ENCODE measurements at regions of chr9 and their contacts with region 1.

Region 1: GRCh38 chr9:15306757-15307534 is at the start of gene TTC39B:
- DNase-seq: peak; percentile 44 to 82 (median 64)
- ATAC-seq: peak; percentile 68 to 77
- H3K4me3 Mint-ChIP-seq: peak within 1 kb of the TSS; percentile 95 to 100 (median 97)
- H3K27ac Mint-ChIP-seq: peak within 1 kb of the TSS; percentile 90 to 97 (median 96)
- H3K4me1 Mint-ChIP-seq: peaks cover 21 to 64% (median 62%) of the 10 kb centered on the region in 4 donors
- H3K27me3 Mint-ChIP-seq: no peaks in the 10 kb centered on the region
- polyA plus RNA-seq, gene TTC39B: 4.5 to 13.0 (median 10.1) TPM

Region 2: DNA sequence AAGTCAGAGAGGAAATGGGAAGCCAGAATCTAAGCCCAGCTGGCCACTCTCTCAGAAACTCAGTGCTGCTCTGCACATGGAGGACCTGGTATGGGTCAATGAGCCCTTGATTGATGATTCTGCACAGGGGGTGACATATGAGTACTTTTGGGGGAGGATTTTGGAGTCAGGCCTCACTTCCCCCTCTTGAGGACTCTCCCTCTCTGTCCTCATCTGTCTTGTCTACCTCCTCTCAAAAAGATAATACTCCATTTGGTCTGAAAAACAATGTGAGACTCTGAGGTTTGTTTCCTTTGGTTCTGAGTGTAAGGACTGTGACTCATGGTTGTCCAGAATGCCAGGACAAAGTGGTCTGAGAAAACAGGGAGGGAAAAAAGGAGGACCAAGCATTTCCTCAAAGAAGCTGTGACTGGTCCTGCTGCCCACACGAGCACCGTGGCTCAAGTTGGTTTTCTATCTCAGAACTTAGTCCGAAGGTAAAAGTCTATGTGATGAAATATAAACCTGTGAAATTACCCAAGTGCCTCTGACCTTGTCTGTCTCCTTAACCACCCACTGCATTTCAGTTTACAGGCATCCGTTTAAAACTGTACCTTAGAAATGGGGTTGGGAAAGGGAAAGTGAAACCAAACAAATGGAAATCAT is 11.1 kb before region 1 on chr9:
- POLR2A ChIA-PET with region 1: interaction called, 129 read pairs
- DNase-seq: peak in 3 of 10 donors; percentile 44 to 66 (median 62)
- ATAC-seq: peak; percentile 14 to 43
- H3K4me3 Mint-ChIP-seq: peak overlapping the region; percentile 74 to 92 (median 84)
- H3K27ac Mint-ChIP-seq: peak overlapping the region; percentile 93 to 100 (median 97)
- H3K4me1 Mint-ChIP-seq: peaks cover 43 to 93% (median 84%) of the 10 kb centered on the region in 4 donors
- H3K27me3 Mint-ChIP-seq: no peaks in the 10 kb centered on the region

Region 3: DNA sequence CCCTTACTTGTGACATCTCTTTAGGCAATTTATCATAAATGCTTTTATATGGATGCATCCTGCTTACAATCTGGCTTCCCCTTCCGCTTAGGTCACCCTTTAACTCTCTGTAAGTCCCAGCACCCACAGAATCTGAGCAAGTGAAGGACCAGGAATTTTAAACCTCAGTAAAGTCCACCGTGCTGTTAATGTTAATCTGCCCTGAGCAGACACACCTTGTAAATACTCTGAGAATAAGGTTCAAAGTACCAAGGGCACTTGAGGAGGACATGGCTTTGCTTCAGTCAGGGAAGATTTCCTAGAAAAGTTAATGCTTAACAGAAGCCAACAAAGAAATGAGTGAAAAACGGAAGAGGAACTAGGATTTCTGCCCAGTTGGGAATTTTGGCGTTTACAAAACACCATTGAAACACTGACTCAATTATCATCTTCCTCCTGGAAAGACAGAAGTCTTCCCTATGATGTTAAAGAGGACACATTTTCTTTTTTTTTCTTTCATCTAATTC is 26.5 kb after region 1 on chr9:
- POLR2A ChIA-PET with region 1: no interaction called
- DNase-seq: no peak
- ATAC-seq: no peak
- H3K4me3 Mint-ChIP-seq: no peak overlapping the region
- H3K27ac Mint-ChIP-seq: peak overlapping the region in 2 of 10 donors; percentile 8 to 9
- H3K4me1 Mint-ChIP-seq: peaks cover 0 to 6% (median 3%) of the 10 kb centered on the region in 4 donors
- H3K27me3 Mint-ChIP-seq: peaks cover 0 to 2% (median 0%) of the 10 kb centered on the region in 5 donors

Region 4: DNA sequence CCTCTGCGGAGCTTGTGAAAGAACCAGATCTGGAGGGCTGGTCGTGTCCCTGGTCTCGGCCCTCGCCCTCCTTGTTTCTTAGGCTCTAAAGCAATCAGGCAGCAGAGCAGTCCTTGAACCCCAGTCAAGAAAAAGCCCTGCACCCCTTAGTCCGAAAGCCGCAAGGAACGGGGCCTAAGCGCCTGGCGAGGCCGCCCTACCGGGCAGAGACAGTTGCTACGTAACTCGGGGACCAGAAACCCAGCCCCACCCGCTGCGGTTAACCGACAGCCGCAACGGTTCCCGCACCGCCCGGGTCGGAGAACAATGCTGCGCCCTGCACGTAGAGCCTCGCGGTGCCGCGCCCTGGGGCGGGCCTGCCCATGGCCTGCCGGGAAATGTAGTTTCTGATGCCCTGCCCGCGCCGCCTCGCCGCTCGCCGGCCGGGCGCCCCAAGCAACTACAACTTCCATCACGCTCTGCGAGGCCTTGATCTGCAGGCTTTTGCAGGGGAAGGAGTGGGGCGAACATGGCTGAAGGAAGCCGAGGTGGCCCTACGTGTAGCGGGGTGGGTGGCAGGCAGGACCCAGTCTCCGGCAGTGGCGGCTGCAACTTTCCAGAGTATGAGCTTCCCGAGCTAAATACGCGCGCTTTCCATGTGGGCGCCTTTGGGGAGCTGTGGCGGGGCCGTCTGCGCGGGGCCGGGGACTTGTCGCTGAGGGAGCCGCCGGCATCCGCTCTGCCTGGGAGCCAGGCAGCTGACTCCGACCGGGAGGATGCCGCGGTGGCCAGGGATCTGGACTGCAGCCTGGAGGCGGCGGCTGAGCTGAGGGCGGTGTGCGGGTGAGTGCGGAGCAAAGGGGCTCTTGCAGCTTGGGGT is 115.7 kb after region 1 on chr9 and contains the start of gene SNAPC3:
- POLR2A ChIA-PET with region 1: interaction called, 13 read pairs
- DNase-seq: peak; percentile 87 to 95 (median 92)
- ATAC-seq: peak; percentile 93 to 96
- H3K4me3 Mint-ChIP-seq: peak within 1 kb of the TSS; percentile 89 to 95 (median 92)
- H3K27ac Mint-ChIP-seq: peak within 1 kb of the TSS; percentile 85 to 97 (median 94)
- H3K4me1 Mint-ChIP-seq: peaks cover 11 to 48% (median 32%) of the 10 kb centered on the region in 4 donors
- H3K27me3 Mint-ChIP-seq: no peaks in the 10 kb centered on the region
- polyA plus RNA-seq, gene SNAPC3: 8.6 to 12.1 (median 11.5) TPM